Lower leg skin (tissue), 4 donors: ENCODE measurements at regions of chr6 and their contacts with region 1.

Region 1: DNA sequence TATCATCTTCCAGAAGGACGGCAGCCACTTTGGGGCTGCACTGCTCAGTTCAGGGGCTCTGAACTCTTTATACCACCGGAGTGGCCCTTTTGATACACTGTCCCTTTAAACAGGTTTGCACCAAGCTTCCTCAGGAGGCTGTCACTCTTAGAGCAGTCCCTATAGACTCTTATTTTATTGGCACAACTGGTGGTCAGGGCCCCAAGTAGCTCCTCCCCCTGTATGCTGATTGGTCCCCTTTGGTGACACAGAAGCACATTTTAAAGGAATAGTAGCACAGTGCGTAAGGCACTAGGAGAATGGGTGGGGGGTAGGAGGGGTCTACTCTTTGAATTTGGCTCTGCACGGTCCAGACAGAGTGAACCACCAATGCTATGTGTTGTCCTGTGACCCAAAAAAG is 122.6 kb upstream of the MLN start:
- DNase-seq: no peak
- H3K4me3 ChIP-seq: no peak overlapping the region
- CTCF ChIP-seq: no peak
- POLR2A ChIP-seq: no peak

Region 2: GRCh38 chr6:33854572-33855030 is 71.8 kb before region 1 on chr6:
- intact Hi-C with region 1: loop called (anchors 2 kb)
- DNase-seq: no peak
- H3K4me3 ChIP-seq: no peak overlapping the region
- CTCF ChIP-seq: no peak
- POLR2A ChIP-seq: no peak

Region 3: GRCh38 chr6:33967966-33968724 is 41.7 kb after region 1 on chr6:
- intact Hi-C with region 1: no loop called
- DNase-seq: peak in 1 of 2 donors; percentile 64
- H3K4me3 ChIP-seq: no peak overlapping the region
- CTCF ChIP-seq: no peak
- POLR2A ChIP-seq: no peak

Region 4: DNA sequence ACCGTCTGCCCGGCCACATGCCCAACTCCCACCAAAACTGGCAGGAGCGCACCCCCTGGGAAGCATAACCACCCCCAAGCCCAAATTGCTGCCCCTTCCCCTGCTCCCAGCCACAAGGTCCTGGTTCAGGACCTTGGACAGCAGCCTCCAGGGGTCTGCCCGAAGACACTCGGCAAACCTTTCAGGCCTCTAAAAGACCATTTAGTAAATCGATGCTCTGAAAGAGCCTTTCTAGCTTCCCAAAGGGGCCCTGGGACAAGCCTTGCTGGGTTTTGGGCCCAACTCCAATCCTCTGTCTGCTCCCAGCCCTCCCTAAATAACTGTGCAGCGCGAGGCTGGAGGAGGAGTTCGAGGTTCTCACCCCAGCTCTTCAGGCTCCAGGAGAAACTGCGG is 188.9 kb after region 1 on chr6:
- intact Hi-C with region 1: loop called (anchors 10 kb)
- DNase-seq: no peak
- H3K4me3 ChIP-seq: no peak overlapping the region
- CTCF ChIP-seq: no peak
- POLR2A ChIP-seq: no peak

Region 5: DNA sequence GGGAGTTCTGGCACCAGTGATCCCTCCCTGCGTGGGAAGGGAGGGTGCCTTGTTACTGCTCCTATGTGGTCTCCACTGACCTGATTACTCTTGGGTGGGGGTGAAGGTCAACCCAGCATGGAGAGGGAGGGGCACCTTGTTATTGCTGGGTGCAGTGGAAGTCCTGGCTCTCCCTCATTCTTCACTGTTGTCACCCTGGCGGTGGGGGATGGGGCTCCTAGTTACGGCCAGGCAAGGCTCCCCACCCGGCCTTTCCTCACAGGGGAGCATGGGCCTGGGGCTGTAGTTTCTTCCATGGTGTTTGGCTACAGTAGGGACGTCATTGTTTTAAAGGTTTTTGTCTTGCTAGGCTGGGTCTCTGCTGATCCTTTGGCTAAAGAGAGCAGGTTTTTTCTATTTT is 580.3 kb after region 1 on chr6:
- intact Hi-C with region 1: no loop called
- DNase-seq: no peak
- H3K4me3 ChIP-seq: no peak overlapping the region
- CTCF ChIP-seq: no peak
- POLR2A ChIP-seq: no peak